ENCODE measurements at regions of chr3 and their contacts with region 1.

Region 1: DNA sequence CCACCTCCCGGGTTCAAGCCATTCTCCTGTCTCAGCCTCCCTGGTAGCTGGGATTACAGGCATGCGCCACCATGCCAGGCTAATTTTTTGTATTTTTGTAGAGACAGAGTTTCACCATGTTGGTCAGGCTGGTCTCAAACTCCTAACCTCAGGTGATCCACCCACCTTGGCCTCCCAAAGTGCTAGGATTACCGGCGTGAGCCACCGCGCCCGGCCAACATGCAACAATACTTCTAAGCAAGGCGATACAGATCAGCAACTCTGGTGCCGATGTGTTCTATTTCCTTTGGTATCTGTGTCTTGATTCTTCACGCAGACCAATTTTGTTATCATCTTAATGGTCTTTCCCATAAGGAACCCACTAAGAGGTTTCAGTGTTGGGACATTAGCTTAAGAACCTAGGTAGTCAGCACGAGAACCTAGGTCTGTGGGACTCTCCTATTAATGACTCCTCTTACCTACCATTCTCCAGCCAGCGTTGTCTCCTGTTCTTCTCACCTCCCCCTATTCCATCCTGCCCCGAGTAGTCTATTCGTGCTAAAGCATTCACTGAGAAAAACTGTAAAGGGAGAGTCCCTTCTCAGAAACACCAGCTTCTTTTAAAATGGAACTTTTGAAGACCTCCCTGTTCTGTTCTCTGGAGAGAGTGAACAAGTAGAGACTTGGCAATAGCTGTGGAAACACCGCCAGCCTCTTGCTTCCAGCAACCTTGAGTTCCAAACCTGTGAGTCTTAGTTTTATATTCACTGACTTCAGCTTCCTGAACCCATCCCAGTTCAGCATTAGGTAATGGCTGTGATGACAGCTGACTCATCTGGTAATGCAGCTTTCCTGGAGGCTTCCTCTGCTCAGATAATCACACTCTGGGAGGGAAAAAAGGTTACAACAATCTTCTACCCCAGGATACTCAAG is 61.2 kb downstream of the TSC22D2 start:
- DNase-seq: peak; percentile 98
- H3K4me3 ChIP-seq: peak overlapping the region; percentile 10 to 33 (median 33)
- H3K27ac ChIP-seq: peak overlapping the region; percentile 94
- H3K4me1 ChIP-seq: peaks cover 23% of the 10 kb centered on the region
- H3K27me3 ChIP-seq: no peaks in the 10 kb centered on the region
- CTCF ChIP-seq: no peak

Region 2: GRCh38 chr3:150449169-150449721 is 20.0 kb before region 1 on chr3:
- CTCF ChIA-PET with region 1: no interaction called
- dilution Hi-C with region 1: no loop called
- in situ Hi-C with region 1: no loop called
- intact Hi-C with region 1: loop called (anchors 2 kb)
- DNase-seq: peak; percentile 70
- H3K4me3 ChIP-seq: peak overlapping the region in 2 of 3 experiments; percentile 9 to 28
- H3K27ac ChIP-seq: peak overlapping the region; percentile 52
- H3K4me1 ChIP-seq: peaks cover 33% of the 10 kb centered on the region
- H3K27me3 ChIP-seq: no peaks in the 10 kb centered on the region
- CTCF ChIP-seq: no peak

Measured in mammary epithelial cell (primary cell).